Activated CD4-positive, alpha-beta memory T cell treated with anti-CD3 and anti-CD28 coated beads for 36 hours (primary cell): ENCODE measurements at regions of chr19 and their contacts with region 1.

Region 1: GRCh38 chr19:47047763-47048405 is 540 bp downstream of the TMEM160 start:
- DNase-seq: peak; percentile 91
- H3K4me3 Mint-ChIP-seq: peak overlapping the region; percentile 99
- H3K27ac Mint-ChIP-seq: peak overlapping the region; percentile 87
- H3K4me1 Mint-ChIP-seq: peaks cover 12% of the 10 kb centered on the region
- H3K27me3 Mint-ChIP-seq: peaks cover 1% of the 10 kb centered on the region

Region 2: DNA sequence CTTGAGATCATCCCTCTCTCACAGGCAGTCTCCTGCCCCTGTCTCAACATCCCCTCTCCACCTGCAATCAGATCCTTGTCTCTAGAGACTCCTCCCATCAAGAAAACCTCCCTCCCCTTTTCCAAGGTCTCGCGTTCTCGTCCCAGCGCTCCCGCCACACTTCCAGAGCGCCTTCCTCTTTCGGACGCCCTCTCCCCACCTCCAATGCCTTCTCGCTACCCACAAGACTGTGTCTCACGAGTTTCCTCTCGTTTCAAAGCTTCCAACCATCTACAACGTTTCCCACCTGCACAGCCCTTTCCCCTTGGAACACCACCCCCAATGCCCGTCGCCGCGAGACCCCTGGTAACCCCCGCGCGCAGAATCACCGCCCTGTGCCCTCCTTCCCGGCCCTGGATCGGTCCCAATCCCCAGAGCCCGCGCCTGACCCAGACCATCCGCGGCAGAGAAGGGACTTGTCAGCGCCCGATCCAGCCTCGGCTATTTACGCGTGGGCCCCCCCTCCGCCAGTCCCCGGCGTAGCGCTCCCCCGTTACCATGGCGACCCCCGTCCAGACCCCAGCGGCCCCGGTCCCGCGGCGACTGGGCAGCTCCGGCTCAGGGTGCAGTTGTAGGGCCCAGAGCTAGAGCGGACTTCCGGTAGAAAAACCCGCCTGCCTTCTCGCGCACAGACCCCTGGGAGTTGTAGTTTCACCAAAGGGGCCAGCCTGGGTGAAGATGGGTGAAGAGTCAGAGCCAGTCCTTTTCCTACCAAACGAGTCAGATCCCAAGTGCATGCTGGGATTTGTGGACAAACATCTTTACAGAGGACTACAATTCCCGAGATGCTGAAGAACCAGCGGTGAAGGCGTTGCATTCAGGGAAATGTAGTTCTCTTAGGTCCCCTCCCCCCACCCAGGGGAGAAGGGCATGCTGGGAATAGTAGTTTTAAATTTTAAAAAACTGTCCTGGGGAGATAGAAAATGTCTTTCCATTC is 197.4 kb before region 1 on chr19 and contains the start of gene AP2S1:
- CTCF ChIA-PET with region 1: no interaction called
- POLR2A ChIA-PET with region 1: no interaction called
- intact Hi-C with region 1: loop called (anchors 1 kb)
- DNase-seq: peak; percentile 96
- H3K4me3 Mint-ChIP-seq: peak within 1 kb of the TSS; percentile 95
- H3K27ac Mint-ChIP-seq: peak within 1 kb of the TSS; percentile 80
- H3K4me1 Mint-ChIP-seq: peaks cover 19% of the 10 kb centered on the region
- H3K27me3 Mint-ChIP-seq: no peaks in the 10 kb centered on the region
- total RNA-seq, gene AP2S1: 108 to 117 TPM

Region 3: DNA sequence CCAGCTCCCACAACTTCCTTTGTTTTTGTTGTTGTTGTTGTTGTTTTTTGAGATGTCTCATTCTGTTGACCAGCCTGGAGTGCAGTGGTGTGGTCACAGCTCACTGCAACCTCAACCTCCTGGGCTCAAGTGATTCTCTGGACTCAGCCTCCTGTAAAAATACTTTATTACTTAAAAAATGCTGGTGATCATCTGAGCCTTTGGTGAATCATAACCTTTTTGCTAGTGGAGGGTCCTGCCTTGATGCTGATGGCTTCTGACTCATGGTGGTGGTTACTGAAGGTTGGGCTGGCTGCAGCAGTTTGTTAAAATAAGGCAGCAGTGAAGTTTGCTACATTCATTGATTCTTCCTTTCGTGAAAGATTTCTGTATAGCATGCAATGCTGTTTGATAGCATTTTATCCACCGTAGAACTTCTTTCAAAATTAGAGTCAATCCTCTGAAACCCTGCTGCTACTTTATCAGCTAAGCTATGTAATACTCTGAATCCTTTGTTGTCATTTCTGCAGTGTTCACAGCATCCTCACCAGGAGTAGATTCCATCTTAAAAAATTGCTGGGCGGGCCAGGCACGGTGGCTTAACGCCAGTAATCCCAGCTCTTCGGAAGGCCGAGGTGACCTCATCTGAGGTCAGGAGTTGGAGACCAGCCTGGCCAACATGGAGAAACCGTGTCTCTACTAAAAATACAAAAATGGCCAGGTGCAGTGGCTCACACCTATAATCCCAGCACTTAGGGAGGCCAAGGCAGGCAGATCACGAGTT is 169.1 kb before region 1 on chr19:
- CTCF ChIA-PET with region 1: no interaction called
- POLR2A ChIA-PET with region 1: no interaction called
- intact Hi-C with region 1: no loop called
- DNase-seq: no peak
- H3K4me3 Mint-ChIP-seq: no peak overlapping the region
- H3K27ac Mint-ChIP-seq: peak overlapping the region; percentile 28
- H3K4me1 Mint-ChIP-seq: peaks cover 14% of the 10 kb centered on the region
- H3K27me3 Mint-ChIP-seq: no peaks in the 10 kb centered on the region

Region 4: GRCh38 chr19:47058621-47059020 is 10.7 kb after region 1 on chr19:
- CTCF ChIA-PET with region 1: no interaction called
- POLR2A ChIA-PET with region 1: no interaction called
- intact Hi-C with region 1: no loop called
- DNase-seq: no peak
- H3K4me3 Mint-ChIP-seq: no peak overlapping the region
- H3K27ac Mint-ChIP-seq: no peak overlapping the region
- H3K4me1 Mint-ChIP-seq: no peaks in the 10 kb centered on the region
- H3K27me3 Mint-ChIP-seq: no peaks in the 10 kb centered on the region